Left ventricle myocardium superior (tissue), 1 donor: ENCODE measurements at regions of chr9 and their contacts with region 1.

Region 1: GRCh38 chr9:81335879-81336421 is 353.4 kb downstream of the TLE1 start:
- DNase-seq: no peak
- ATAC-seq: no peak

Region 2: GRCh38 chr9:81266674-81267073 is 69.3 kb before region 1 on chr9:
- intact Hi-C with region 1: loop called (anchors 10 kb)
- DNase-seq: no peak
- ATAC-seq: no peak

Region 3: GRCh38 chr9:81317939-81318338 is 18.0 kb before region 1 on chr9:
- intact Hi-C with region 1: loop called (anchors 2 kb)
- DNase-seq: no peak
- ATAC-seq: no peak